Right lobe of liver (tissue), 6 donors: ENCODE measurements at regions of chr21 and their contacts with region 1.

Region 1: DNA sequence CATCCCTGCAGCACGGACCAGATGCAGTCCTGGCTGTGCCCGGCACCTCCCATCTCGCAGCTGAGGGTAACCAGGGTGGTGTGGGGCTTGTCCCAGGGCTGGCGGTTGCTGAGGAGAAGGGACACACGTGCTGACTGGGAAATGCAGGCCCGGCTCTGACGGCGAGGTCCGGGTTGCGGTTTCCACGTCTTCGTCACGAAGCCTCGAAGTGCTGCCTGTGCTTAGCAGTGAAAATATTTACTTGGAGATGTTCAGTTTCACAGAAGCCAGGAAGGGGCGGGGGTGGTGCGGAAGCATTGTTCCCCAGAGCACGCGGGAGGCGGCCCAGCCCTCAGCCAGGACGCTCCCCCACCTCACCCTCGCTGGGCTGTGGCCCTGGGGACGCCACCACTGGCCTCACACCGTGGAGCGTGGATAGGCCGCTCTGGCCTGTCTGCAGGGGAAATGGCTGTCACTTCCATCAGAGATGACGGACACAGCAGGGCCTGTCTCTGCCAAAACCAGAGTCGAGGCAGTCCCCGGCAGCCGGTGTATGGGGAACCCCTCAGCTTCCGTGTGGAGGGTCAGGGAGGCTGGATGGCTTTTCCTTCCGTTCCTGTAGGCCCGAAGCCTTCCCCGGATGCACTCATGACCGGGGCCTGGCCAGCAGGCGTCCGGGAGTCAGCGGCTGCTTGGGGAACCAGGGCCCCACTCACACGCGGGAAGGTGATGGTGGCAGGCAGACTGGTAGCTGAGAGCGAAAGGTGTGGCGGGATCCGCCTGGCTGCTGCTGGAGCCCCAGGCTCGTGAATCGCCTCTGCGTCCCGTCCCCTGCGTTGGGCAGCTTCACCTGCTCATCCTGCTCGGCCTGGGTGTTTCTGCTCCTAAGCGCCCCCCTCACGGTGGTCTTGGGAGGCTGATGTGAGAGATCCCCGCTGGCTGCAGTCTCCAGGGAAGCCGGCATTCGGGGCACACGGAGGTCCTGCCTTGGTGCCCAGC is 14.7 kb upstream of the POFUT2 start:
- DNase-seq: peak in 2 of 3 donors; percentile 61 to 64
- ATAC-seq: peak; percentile 55 to 69 (median 59)
- H3K4me3 ChIP-seq: no peak overlapping the region
- H3K27ac ChIP-seq: peak overlapping the region in 2 of 3 donors; percentile 33 to 69
- H3K4me1 ChIP-seq: peaks cover 0 to 14% (median 4%) of the 10 kb centered on the region in 4 donors
- H3K27me3 ChIP-seq: no peaks in the 10 kb centered on the region
- CTCF ChIP-seq: no peak
- POLR2A ChIP-seq: no peak

Region 2: GRCh38 chr21:45404730-45405270 is 102.4 kb after region 1 on chr21 and contains the start of gene COL18A1:
- intact Hi-C with region 1: no loop called
- DNase-seq: peak; percentile 72 to 77 (median 72)
- ATAC-seq: peak; percentile 39 to 50 (median 43)
- H3K4me3 ChIP-seq: peak within 1 kb of the TSS; percentile 53 to 60 (median 57)
- H3K27ac ChIP-seq: peak within 1 kb of the TSS in 2 of 3 donors; percentile 26 to 77
- H3K4me1 ChIP-seq: peaks cover 0 to 16% (median 5%) of the 10 kb centered on the region in 4 donors
- H3K27me3 ChIP-seq: no peaks in the 10 kb centered on the region
- CTCF ChIP-seq: no peak
- POLR2A ChIP-seq: no peak
- total RNA-seq, gene COL18A1: 261 to 487 (median 297) TPM

Region 3: GRCh38 chr21:45439161-45439872 is 136.9 kb after region 1 on chr21:
- intact Hi-C with region 1: loop called in 1 of 2 experiments (anchors 5 kb)
- DNase-seq: peak; percentile 84 to 88 (median 87)
- ATAC-seq: peak; percentile 79 to 90 (median 82)
- H3K4me3 ChIP-seq: peak overlapping the region; percentile 20 to 48 (median 32)
- H3K27ac ChIP-seq: peak overlapping the region; percentile 23 to 64 (median 58)
- H3K4me1 ChIP-seq: peaks cover 0 to 25% (median 5%) of the 10 kb centered on the region in 4 donors
- H3K27me3 ChIP-seq: no peaks in the 10 kb centered on the region
- CTCF ChIP-seq: peak; percentile 97 to 99 (median 98)
- POLR2A ChIP-seq: peak; percentile 39